ENCODE measurements at regions of chr1 and their contacts with region 1.

Region 1: DNA sequence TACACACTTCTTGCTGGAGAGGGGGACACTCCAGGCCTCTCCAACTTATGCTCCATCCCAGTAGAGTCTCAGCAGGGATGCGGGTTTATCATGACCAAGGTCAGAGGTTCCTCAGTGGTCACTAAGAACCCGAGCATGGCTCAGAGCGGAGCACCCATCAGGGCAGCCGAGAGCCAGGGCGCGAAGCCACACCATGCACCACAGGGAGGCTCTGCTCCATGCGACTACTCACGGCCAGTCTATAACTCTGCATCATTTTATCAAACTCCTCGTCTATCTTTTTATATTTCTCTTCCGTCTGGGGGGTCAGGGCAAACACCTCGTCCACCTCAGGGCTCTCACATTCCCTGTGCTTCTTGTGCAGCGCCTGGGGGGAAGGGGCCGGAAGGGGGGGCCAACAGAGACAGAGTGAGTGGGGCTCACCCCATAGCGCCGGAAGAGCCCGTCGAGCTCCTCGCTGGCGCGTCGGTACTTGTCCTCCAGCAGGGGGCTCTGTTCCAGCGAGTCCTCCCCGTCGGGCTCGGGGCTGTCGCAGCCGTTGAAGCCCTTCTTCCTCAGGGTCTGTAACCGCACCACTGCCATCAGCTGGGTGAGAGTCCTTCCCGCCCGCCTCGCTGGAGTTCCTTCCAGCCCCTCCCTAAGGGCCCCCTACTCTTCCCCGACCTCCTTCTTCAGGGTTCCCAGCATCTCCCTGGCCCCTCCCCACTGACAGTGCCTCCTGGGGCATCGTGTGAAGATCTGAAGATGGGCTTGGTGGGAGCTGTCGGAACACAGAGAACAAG is 20.0 kb downstream of the MEF2D start:
- DNase-seq: no peak
- H3K4me3 ChIP-seq: no peak overlapping the region
- H3K27ac ChIP-seq: no peak overlapping the region
- H3K27me3 ChIP-seq: no peaks in the 10 kb centered on the region
- CTCF ChIP-seq: peak; percentile 67

Region 2: GRCh38 chr1:156129706-156130581 is 350.7 kb before region 1 on chr1:
- CTCF ChIA-PET with region 1: no interaction called
- POLR2A ChIA-PET with region 1: no interaction called
- DNase-seq: peak; percentile 93
- H3K4me3 ChIP-seq: peak overlapping the region; percentile 49
- H3K27ac ChIP-seq: peak overlapping the region; percentile 100
- H3K27me3 ChIP-seq: no peaks in the 10 kb centered on the region
- CTCF ChIP-seq: peak; percentile 95

Region 3: GRCh38 chr1:156500797-156501499 is 20.3 kb after region 1 on chr1:
- CTCF ChIA-PET with region 1: interaction called, 18 read pairs
- POLR2A ChIA-PET with region 1: interaction called, 33 read pairs
- DNase-seq: peak; percentile 92
- H3K4me3 ChIP-seq: peak overlapping the region; percentile 94
- H3K27ac ChIP-seq: peak overlapping the region; percentile 100
- H3K27me3 ChIP-seq: no peaks in the 10 kb centered on the region
- CTCF ChIP-seq: peak; percentile 38